Breast epithelium (tissue), 4 donors: ENCODE measurements at regions of chr1 and their contacts with region 1.

Region 1: GRCh38 chr1:191002768-191003167 is 525.1 kb upstream of the BRINP3 start:
- DNase-seq: no peak
- H3K4me3 ChIP-seq: no peak overlapping the region
- H3K27ac ChIP-seq: no peak overlapping the region
- H3K4me1 ChIP-seq: no peaks in the 10 kb centered on the region
- H3K27me3 ChIP-seq: no peaks in the 10 kb centered on the region
- CTCF ChIP-seq: no peak
- POLR2A ChIP-seq: no peak

Region 2: DNA sequence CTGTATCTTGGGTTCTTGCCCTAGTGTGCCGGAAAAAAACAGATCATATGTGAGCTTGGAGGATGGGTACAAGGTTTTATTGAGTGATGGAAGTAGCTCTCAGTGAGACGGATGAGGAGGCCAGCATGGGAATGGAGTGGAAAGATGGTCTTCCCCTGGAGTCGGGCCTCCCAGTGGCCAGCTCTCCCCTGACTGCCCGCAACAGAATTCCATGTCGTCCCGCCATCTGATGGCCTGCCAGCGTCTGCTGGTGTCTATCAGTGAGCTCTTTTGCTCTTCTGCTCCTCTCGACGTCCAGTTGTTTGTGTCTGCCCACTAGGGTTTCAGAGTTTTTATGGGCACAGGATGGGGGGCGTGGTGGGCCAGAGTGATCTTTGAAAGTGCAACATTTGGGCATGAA is 209.9 kb before region 1 on chr1:
- intact Hi-C with region 1: loop called (anchors 5 kb)
- DNase-seq: no peak
- H3K4me3 ChIP-seq: no peak overlapping the region
- H3K27ac ChIP-seq: no peak overlapping the region
- H3K4me1 ChIP-seq: no peaks in the 10 kb centered on the region
- H3K27me3 ChIP-seq: no peaks in the 10 kb centered on the region
- CTCF ChIP-seq: no peak
- POLR2A ChIP-seq: no peak

Region 3: DNA sequence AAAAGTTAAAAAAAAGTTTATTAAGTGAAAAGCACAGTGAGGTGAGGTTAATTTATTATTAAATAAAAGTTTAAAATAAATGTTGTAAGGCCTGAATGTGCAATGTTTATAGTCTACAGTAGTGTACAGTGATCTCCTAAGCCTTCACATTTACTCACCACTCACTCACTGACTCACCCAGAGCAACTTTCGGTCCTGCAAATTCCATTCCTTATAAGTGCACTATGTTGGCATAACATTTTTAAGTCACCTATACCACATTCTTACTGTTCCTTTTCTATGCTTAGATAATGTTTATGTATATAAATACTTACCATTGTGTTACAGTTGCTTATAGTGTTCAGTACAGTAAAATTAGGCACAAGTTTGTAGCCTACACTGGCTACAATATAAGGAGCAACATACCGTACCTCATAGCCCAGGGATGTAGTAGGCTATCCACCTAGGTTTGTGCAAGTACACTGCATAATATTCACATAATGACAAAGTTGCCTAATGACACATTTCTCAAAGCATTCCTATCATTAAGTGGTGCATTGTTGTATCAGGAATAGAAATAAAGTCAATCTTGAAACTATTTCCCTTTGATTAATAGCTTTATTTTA is 98.6 kb before region 1 on chr1:
- intact Hi-C with region 1: no loop called
- DNase-seq: no peak
- H3K4me3 ChIP-seq: no peak overlapping the region
- H3K27ac ChIP-seq: no peak overlapping the region
- H3K4me1 ChIP-seq: no peaks in the 10 kb centered on the region
- H3K27me3 ChIP-seq: no peaks in the 10 kb centered on the region
- CTCF ChIP-seq: no peak
- POLR2A ChIP-seq: no peak

Region 4: DNA sequence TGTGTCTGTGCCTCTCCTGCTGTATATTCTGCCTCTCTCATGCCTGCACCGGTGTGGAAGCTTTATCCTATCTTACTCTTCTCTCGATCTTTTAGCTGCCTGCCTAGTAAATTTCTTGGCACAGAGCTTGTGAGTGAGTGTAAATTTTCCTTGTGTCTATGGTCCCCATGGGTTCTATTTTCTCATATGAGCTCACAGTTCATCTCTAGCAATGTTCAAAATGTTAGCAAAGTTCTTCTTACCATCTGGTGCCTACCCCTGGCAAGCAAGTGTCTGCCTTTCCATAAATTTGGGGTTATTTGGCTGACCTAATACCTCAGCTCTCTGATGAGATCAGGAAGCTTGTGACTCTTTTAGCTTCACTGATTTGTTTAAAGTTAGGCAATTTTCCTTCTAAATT is 47.0 kb after region 1 on chr1:
- intact Hi-C with region 1: no loop called
- DNase-seq: no peak
- H3K4me3 ChIP-seq: no peak overlapping the region
- H3K27ac ChIP-seq: no peak overlapping the region
- H3K4me1 ChIP-seq: no peaks in the 10 kb centered on the region
- H3K27me3 ChIP-seq: no peaks in the 10 kb centered on the region
- CTCF ChIP-seq: no peak
- POLR2A ChIP-seq: no peak